GM18951 (cell line): ENCODE measurements at regions of chr9 and their contacts with region 1.

Region 1: DNA sequence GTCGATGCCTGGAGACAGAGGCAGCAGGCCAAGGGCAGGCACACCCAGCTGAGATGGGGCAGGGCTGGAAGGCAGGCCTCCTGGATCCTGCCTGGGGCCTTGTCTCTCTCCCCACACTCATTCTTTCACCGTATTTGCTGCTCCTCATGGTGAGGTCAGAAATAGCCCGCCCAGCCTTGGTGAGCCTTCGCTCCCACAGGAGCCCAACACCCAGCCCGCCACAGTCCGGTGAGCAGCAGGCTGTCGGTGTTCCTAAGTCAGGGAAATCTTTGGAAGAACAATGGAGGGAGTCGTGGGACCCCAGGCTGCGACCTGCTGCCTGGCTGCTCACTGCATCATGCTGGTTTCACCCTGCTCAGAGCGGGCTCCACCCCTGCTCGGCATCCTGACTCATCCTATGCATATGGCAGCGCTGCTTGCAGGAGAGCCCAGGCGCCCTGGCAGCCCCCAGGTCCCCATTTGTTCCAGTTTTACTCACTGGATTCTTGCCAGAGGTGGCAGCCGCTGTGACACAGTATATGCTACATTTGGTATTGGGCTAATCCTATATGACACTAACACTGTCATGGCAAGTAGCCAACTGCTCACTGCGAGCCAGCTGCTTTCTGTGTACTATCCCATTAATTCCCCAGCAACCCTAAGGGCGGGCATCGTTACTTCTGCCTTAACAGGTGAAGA is 53.2 kb upstream of the NCS1 start:
- POLR2A ChIP-seq: no peak

Region 2: DNA sequence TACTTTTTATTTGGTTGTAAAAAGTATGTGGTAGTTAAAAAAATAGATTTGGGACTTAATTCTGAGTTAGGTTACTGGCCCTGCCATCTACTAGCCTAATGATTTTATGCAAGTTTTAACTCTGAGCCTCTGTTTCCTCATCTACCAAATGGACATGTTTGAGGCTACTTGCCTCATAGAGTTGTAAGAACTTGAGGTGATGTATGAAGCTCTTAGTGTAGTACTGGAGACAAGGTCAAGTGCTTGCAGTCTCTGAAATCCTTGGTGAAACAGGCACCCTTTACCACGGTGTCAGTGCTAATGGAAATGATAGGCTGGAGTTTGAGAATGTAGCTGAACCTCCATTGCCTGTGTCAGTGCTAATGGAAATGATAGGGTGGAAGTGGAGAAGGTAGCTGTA is 49.9 kb before region 1 on chr9:
- in situ Hi-C with region 1: no loop called
- POLR2A ChIP-seq: no peak

Region 3: DNA sequence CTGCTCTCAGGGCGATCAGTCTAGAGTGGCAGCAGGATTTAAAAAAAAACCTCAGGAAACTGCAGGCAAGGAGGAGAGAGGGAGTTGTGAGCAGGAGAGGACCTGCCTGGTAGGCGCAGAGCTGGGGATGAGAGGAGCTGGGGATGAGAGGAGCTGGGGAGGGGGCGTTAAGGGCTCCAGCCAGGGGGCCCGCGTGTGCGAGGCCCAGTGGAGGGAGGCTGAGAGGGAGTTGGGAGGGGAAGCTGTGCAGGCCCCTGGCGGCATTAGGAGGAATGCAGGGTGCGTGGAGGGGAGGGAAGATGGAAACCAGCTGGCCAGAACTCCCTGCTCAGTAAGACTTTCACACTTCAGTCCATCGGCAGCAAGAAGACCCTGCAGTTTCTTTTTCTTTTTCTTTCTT is 101.4 kb after region 1 on chr9:
- in situ Hi-C with region 1: loop called (anchors 10 kb)
- POLR2A ChIP-seq: no peak

Region 4: DNA sequence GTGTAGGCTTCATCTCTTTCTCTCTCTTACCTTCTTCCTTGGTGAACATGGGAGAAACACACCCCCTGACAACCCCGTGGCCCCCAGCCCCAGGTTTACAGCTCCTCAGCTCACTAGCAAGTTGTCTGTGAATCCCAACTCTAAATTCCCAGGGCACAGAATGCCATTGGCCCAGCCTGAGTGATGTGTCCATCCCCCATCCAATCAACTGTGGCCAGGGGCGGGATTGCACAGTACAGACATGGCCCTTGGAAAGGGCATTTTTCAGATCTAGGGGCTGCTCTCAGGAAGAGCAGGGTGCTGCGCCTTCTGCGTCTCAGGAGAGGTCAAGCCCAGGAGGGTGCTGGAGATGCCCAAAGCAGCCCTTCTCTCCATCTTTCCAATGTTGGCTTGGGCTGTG is 277.6 kb after region 1 on chr9:
- in situ Hi-C with region 1: no loop called
- POLR2A ChIP-seq: no peak

Region 5: GRCh38 chr9:130555968-130556367 is 437.0 kb after region 1 on chr9:
- in situ Hi-C with region 1: no loop called
- POLR2A ChIP-seq: no peak

Region 6: GRCh38 chr9:130606887-130607600 is 488.1 kb after region 1 on chr9:
- in situ Hi-C with region 1: no loop called
- POLR2A ChIP-seq: no peak